ENCODE measurements at regions of chr2 and their contacts with region 1.

Region 1: GRCh38 chr2:207260947-207261346 is 95.2 kb upstream of the KLF7 start:
- DNase-seq: no peak
- ATAC-seq: no peak

Region 2: GRCh38 chr2:207166039-207166348 is 95.0 kb before region 1 on chr2:
- intact Hi-C with region 1: loop called in 1 of 2 experiments (anchors 5 kb)
- DNase-seq: peak; percentile 94 to 97
- ATAC-seq: peak; percentile 94